Colonic mucosa (tissue), 4 donors: ENCODE measurements at regions of chr7 and their contacts with region 1.

Region 1: DNA sequence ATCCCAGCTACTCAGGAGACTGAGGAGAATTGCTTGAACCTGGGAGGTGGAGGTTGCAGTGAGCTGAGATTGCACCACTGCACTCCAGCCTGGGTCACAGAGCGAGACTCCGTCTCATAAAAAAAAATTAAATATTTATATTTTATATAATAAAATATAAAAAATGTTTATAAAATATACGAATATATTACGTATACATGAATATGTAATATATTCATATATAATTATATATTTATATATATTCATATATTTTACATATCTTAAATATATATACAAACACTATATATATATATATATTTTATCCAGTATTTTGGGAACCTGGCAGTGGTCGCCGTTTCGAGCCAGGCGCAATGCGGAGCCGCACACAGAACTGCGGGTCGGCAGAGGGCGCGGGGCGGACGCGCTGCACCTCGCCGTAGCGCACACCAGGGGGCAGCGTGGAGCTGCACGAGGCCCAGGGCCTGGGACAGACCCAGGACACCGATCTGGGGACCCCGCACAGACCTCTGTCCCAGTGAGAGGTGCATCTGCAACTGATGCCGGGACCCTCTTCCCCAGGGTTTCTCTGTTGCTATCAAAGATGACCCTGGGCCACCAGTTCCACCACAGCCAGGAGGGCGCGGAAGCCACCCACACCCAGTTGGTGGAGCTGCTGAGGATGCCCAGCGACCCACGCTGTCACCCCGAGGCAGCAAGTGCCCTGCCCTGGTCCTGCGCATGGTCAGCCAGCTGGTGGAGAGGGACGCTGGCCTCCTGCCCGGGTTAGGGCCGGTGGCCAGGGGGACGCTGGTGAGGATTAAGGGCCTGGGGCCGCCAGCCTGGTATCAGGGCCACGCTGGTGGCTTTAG is 22.7 kb downstream of the AP5Z1 start:
- DNase-seq: peak; percentile 44
- H3K4me3 ChIP-seq: no peak overlapping the region
- H3K27ac ChIP-seq: no peak overlapping the region
- H3K4me1 ChIP-seq: peaks cover under 1% of the 10 kb centered on the region
- H3K27me3 ChIP-seq: no peaks in the 10 kb centered on the region
- CTCF ChIP-seq: peak; percentile 94

Region 2: GRCh38 chr7:4883374-4884144 is 85.5 kb after region 1 on chr7 and contains the start of gene RADIL:
- intact Hi-C with region 1: loop called (anchors 10 kb)
- DNase-seq: peak; percentile 91
- H3K4me3 ChIP-seq: peak within 1 kb of the TSS; percentile 39
- H3K27ac ChIP-seq: peak within 1 kb of the TSS; percentile 2
- H3K4me1 ChIP-seq: peaks cover 3% of the 10 kb centered on the region
- H3K27me3 ChIP-seq: peaks cover 8% of the 10 kb centered on the region
- CTCF ChIP-seq: peak; percentile 57
- total RNA-seq, gene RADIL: 0.54 to 1.9 TPM